Mammary epithelial cell (primary cell): ENCODE measurements at regions of chr7 and their contacts with region 1.

Region 1: DNA sequence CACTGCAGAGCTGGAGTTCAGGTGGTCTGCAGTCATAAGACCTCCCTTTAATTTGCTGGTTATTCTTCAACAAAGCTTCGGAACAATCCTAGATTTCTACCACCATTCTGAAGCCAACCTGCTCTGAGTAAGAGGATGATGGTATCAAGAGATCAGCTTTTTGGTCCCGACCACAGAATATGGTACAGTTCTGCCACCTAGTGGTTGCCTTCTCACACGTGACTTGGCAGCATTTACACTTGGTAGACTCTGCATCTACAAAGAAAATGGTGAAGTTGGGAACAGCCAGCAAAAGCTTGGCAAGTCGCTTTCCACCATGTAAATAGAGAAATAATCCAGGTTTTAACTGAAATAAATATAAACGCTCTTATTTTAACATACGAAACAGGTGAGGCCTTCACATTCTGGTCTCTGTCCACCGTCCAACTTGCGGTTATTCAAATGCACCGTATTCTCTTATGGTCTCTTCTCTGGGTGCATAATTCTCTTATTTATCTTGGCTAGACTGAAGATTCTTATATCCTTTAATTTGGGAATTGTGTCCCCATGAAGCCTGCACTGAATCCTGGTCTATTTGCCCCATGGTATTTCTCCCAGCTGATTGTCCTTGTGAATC is 173.9 kb upstream of the GRM3 start:
- DNase-seq: peak; percentile 59
- H3K4me3 ChIP-seq: no peak overlapping the region
- H3K27ac ChIP-seq: no peak overlapping the region
- H3K4me1 ChIP-seq: no peaks in the 10 kb centered on the region
- H3K27me3 ChIP-seq: no peaks in the 10 kb centered on the region
- CTCF ChIP-seq: peak; percentile 76 to 77

Region 2: GRCh38 chr7:85882335-85882734 is 587.5 kb before region 1 on chr7:
- CTCF ChIA-PET with region 1: no interaction called
- dilution Hi-C with region 1: loop called (anchors 25 kb)
- in situ Hi-C with region 1: loop called (anchors 10 to 25 kb)
- intact Hi-C with region 1: no loop called
- DNase-seq: no peak
- H3K4me3 ChIP-seq: no peak overlapping the region
- H3K27ac ChIP-seq: no peak overlapping the region
- H3K4me1 ChIP-seq: no peaks in the 10 kb centered on the region
- H3K27me3 ChIP-seq: no peaks in the 10 kb centered on the region
- CTCF ChIP-seq: no peak

Region 3: DNA sequence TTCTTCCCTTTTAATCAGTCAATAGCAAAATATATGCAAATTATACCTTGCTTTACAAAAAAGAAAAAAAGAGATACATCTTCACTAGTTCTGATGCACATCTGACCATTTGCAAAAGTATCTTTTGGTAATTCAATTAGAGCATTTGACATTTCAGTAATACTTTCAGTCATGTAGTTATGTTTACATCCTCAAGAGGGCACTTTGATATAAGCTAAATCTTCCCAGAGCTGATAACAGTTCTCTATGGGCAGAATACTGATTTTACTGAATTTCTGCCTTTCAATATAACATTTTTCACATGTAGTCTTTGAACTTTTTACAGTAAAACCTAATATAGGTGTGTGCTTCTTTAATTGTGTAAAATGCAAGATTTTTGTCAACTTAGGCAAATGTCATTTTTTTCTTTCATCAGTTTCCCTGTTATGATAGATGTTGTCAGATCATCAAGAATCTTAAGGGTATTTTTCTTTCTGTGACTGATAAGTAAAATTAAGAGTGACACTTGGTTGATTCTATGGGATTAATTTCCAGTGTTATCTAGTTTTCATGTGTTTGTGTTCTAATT is 579.5 kb before region 1 on chr7:
- CTCF ChIA-PET with region 1: interaction called, 5 read pairs
- dilution Hi-C with region 1: loop called (anchors 25 kb)
- in situ Hi-C with region 1: loop called (anchors 10 to 25 kb)
- intact Hi-C with region 1: loop called (anchors 1 kb)
- DNase-seq: peak; percentile 4
- H3K4me3 ChIP-seq: no peak overlapping the region
- H3K27ac ChIP-seq: no peak overlapping the region
- H3K4me1 ChIP-seq: no peaks in the 10 kb centered on the region
- H3K27me3 ChIP-seq: no peaks in the 10 kb centered on the region
- CTCF ChIP-seq: peak; percentile 44 to 59

Region 4: GRCh38 chr7:86123476-86123875 is 346.3 kb before region 1 on chr7:
- CTCF ChIA-PET with region 1: no interaction called
- dilution Hi-C with region 1: no loop called
- in situ Hi-C with region 1: no loop called
- intact Hi-C with region 1: no loop called
- DNase-seq: no peak
- H3K4me3 ChIP-seq: no peak overlapping the region
- H3K27ac ChIP-seq: no peak overlapping the region
- H3K4me1 ChIP-seq: no peaks in the 10 kb centered on the region
- H3K27me3 ChIP-seq: no peaks in the 10 kb centered on the region
- CTCF ChIP-seq: no peak

Region 5: GRCh38 chr7:86574006-86574405 is 104.2 kb after region 1 on chr7:
- CTCF ChIA-PET with region 1: no interaction called
- dilution Hi-C with region 1: no loop called
- in situ Hi-C with region 1: no loop called
- intact Hi-C with region 1: no loop called
- DNase-seq: no peak
- H3K4me3 ChIP-seq: no peak overlapping the region
- H3K27ac ChIP-seq: no peak overlapping the region
- H3K4me1 ChIP-seq: no peaks in the 10 kb centered on the region
- H3K27me3 ChIP-seq: no peaks in the 10 kb centered on the region
- CTCF ChIP-seq: no peak

Region 6: DNA sequence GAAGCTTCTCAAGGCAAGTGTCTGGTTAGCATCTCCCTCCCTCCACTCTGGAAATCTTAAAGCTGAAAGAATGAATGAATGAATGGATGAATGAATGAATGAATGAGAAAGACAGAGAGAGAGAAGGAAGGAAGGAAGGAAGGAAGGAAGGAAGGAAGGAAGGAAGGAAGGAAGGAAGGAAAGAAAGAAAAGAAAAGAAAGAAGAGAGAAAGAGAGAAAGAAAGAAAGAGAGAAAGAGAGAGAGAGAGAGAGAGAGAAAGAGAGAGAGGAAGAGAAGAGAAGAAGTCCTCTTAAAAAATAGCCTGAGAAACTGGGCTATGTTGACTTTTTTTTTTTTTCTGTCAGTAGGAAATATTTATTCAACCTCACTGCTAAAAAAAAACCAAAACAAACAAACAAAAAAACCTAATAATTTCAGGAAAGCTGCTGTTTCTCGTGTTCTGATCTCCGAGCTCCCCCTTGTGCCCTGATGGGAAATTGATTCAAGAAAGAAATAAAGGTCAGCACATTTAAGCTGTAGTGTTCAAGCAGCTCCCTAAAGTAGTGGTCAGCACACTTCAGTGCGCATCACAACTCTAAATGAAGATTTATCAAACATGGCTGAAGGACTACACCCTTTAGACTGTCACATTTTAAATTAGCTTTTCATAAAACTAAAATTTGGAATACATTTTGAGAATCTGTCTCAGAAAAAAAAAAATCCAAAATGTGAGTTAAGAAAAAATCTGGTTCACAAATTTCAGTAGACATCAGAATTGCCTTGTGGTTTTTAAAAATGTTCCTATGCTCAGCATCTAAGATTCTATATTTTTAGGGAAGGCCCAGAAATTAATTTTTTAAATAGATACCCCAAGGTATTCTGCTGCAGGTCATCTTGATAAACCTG is 435.4 kb after region 1 on chr7:
- CTCF ChIA-PET with region 1: no interaction called
- dilution Hi-C with region 1: no loop called
- in situ Hi-C with region 1: no loop called
- intact Hi-C with region 1: loop called (anchors 10 kb)
- DNase-seq: peak; percentile 4
- H3K4me3 ChIP-seq: no peak overlapping the region
- H3K27ac ChIP-seq: no peak overlapping the region
- H3K4me1 ChIP-seq: no peaks in the 10 kb centered on the region
- H3K27me3 ChIP-seq: no peaks in the 10 kb centered on the region
- CTCF ChIP-seq: peak; percentile 60 to 62